ENCODE measurements at regions of chr10 and their contacts with region 1.

Region 1: GRCh38 chr10:45404087-45404769 is 30.2 kb downstream of the ALOX5 start:
- H3K4me3 Mint-ChIP-seq: peak overlapping the region; percentile 26
- H3K27ac Mint-ChIP-seq: peak overlapping the region; percentile 75
- H3K4me1 Mint-ChIP-seq: peaks cover 80% of the 10 kb centered on the region
- H3K27me3 Mint-ChIP-seq: no peaks in the 10 kb centered on the region

Region 2: DNA sequence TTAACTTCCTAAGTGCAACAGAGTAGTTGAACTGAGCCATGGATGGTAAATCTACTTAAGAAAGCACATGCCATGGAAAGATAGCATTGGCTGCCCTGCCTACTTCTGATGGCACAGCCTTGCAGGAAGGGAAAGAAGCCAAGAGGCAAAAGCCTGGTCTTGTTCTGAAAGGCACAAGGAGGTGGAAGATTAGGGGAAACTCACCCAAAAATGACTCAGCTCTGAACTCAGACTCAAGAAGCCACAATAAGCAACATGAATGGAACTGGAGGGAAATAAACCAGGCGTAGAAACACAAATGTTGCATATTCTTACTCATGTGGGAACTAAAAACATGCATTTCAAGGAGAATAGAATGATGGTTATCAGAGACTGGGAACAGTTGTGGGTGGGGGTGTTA is 51.0 kb before region 1 on chr10:
- intact Hi-C with region 1: loop called (anchors 10 kb)
- H3K4me3 Mint-ChIP-seq: no peak overlapping the region
- H3K27ac Mint-ChIP-seq: peak overlapping the region; percentile 71
- H3K4me1 Mint-ChIP-seq: peaks cover 48% of the 10 kb centered on the region
- H3K27me3 Mint-ChIP-seq: no peaks in the 10 kb centered on the region